ENCODE measurements at regions of chr18 and their contacts with region 1.

Region 1: GRCh38 chr18:57586251-57587049 is at the start of gene FECH:
- DNase-seq: peak; percentile 77
- H3K4me3 Mint-ChIP-seq: peak within 1 kb of the TSS; percentile 86
- H3K27ac Mint-ChIP-seq: peak within 1 kb of the TSS; percentile 85
- H3K4me1 Mint-ChIP-seq: peaks cover 17% of the 10 kb centered on the region
- H3K27me3 Mint-ChIP-seq: no peaks in the 10 kb centered on the region
- total RNA-seq, gene FECH: 21.7 and 23.5 TPM in 2 replicates

Region 2: DNA sequence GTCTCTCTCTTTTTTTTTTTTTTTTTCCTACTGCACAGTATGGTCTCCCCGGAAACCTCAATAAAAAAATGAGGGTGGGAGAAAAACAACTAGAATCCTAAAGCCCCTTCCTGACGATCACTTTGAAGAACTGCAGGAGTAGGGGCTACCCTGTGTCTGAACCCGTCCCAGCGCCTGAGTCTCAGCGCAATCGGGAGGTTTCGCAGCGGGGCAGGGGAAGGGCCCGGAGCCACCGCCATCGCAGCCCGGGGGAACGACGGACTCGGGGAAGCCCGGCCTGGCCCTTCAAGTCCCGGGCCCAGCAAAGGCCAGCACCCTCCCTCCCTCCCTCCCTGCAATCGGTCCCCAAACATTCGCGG is 34.8 kb after region 1 on chr18:
- intact Hi-C with region 1: loop called (anchors 1 kb)
- DNase-seq: no peak
- H3K4me3 Mint-ChIP-seq: peak overlapping the region; percentile 85
- H3K27ac Mint-ChIP-seq: peak overlapping the region; percentile 87
- H3K4me1 Mint-ChIP-seq: peaks cover 9% of the 10 kb centered on the region
- H3K27me3 Mint-ChIP-seq: no peaks in the 10 kb centered on the region

Region 3: DNA sequence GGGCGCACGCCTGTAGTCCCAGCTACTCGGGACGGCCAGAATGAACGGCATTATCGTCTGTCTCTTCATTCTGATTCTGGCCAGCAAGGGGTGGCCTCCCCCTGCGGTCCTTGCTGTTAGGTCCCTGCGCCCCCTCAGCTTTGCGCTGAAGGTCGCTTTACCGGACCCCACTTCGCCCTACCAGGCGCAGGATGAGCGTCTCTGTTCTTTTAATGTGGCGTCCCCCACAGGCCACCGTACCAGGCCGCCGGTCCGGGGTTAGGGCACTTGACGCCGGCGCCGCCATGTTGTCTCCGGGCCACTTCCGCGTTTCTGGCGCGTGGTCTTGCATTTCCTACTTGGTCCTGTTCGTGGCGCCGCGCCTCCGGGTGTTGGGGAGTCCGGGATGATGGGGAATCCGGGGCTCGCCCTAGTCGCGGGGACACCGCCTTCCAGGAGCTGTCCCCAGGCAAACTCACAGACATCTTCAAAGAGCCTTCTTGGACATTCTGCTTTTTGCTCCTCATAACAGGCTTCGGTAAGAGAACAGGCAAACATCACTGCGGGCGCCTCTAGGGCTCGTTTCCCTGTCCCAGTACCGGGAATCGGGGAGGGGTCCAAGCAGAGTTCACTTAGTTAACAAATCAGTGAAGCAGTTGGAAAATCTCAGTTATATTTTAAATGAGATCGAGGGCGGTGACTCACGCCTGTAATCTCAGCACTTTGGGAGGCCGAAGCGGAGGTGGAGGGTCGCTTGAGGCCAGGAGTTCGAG is 43.7 kb after region 1 on chr18:
- intact Hi-C with region 1: loop called (anchors 2 kb)
- DNase-seq: peak; percentile 89
- H3K4me3 Mint-ChIP-seq: peak overlapping the region; percentile 96
- H3K27ac Mint-ChIP-seq: peak overlapping the region; percentile 94
- H3K4me1 Mint-ChIP-seq: peaks cover 9% of the 10 kb centered on the region
- H3K27me3 Mint-ChIP-seq: no peaks in the 10 kb centered on the region

Region 4: DNA sequence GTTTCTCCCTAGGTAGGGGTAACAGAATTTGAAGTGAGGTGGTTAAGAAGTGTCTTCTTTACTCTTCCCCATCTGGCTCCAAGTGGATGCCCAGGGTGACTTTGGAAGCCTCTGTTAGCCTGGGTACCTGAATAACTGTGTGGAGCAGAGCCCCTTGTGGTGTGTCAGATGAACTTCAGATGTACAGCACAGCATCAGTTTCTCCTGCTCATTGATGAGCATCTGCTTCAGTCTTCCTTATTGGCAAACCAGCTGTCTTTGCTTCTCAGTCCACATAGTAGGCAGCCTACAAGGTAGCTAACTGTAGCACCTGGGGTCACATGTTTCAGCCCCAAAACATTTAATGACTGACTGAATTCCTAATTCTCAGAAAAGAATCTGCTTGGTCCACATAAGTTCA is 272.9 kb after region 1 on chr18:
- intact Hi-C with region 1: loop called (anchors 5 kb)
- DNase-seq: no peak
- H3K4me3 Mint-ChIP-seq: no peak overlapping the region
- H3K27ac Mint-ChIP-seq: no peak overlapping the region
- H3K4me1 Mint-ChIP-seq: no peaks in the 10 kb centered on the region
- H3K27me3 Mint-ChIP-seq: peaks cover 15% of the 10 kb centered on the region

Measured in activated T-helper 1 cell treated with anti-CD3 and anti-CD28 coated beads, Interleukin-12 subunit alpha, Interleukin-12 subunit beta, Interleukin-2, Interleukin-4 antibody, amounts not matched to agents 30 ng/mL and 10 ng/mL and 1 ng/mL, durations not matched to agents 14 hours and 24 hours and 36 hours (primary cell).